H1 (cell line): ENCODE measurements at regions of chr6 and their contacts with region 1.

Region 1: DNA sequence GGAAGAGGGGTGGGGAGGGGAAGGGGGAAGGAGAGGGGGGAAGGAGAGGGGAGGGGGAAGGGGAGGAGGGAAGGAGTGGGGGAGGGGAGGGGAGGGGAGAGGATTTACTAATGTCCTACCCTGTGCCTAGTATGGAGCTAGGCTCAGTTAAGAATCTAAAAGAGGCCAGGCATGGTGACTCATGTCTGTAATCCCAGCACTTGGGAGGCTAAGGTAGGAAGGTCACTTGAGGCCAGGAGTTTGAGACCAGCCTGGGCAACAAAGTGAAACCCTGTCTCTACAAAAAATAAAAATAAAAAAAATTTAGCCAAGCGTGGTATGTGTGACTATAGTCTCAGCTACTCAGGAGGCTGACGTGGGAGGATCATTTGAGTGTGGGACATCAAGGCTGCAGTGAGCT is 13.0 kb downstream of the UBE2J1 start:
- DNase-seq: no peak
- H3K4me3 ChIP-seq: no peak overlapping the region
- H3K27ac ChIP-seq: no peak overlapping the region
- H3K4me1 ChIP-seq: no peaks in the 10 kb centered on the region
- H3K27me3 ChIP-seq: no peaks in the 10 kb centered on the region
- CTCF ChIP-seq: no peak
- EP300 ChIP-seq: no peak
- POLR2A ChIP-seq: no peak
- RAD21 ChIP-seq: no peak

Region 2: DNA sequence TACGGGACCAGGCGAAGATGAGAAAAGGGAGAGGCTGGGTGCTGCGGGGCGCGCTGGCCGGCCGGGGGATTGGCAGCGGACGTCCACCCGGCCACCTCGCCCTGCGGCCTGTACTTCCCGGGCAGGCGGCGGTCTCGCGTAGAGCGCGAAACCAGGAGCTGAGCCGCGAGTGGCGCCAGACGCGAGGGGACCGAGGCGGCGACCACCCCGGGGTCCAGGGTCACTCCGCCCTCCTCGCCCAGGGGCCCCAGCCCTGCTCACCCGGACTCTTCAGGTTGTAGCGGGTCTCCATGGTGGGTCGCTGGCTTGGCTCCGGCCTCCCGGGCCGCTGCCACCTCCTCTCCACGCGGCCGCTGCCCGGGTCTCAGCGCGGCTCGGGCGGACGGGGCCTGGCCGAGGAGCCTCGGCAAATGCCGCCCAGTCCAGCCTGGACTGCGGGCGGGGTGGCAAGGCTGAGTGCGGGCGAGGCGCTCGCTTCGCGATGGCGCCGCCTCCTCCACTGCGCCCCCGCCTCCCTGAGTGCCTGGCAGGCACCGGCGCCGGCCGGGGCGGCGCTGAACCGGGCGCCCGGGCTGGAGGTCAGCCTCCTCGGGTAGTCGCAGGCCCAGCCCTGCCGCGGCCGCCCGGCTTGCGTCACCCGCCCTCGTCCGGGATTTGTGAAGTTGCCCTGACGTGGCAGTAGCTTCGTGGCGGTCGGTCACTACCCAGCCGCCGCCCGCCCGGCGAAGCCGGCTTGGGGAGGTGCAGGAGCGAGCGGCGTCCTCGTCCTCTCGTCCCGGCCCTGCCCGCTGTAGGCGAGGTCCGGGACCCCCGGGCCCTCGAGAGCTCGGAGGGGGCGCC is 12.9 kb after region 1 on chr6 and contains the start of gene UBE2J1:
- CTCF ChIA-PET with region 1: interaction called, 4 read pairs
- POLR2A ChIA-PET with region 1: interaction called, 17 read pairs
- DNase-seq: peak in 1 of 2 experiments; percentile 90
- H3K4me3 ChIP-seq: peak within 1 kb of the TSS; percentile 63 to 70 (median 67)
- H3K27ac ChIP-seq: peak within 1 kb of the TSS; percentile 19; the same call in 1 of the 2 replicates
- H3K4me1 ChIP-seq: peaks cover 0 to 4% (median 0%) of the 10 kb centered on the region in 4 experiments; a peak in 1 of 7 replicates
- H3K27me3 ChIP-seq: no peaks in the 10 kb centered on the region; a peak in 2 of 7 replicates
- CTCF ChIP-seq: no peak
- EP300 ChIP-seq: 0 out of 3 replicates have a peak, but pooled peaks of 1 of the 2 experiments have one; percentile 24
- POLR2A ChIP-seq: peak; percentile 68 to 90
- RAD21 ChIP-seq: no peak
- total RNA-seq, gene UBE2J1: 13.4 and 15.2 TPM in 2 replicates